Esophagus squamous epithelium (tissue), 5 donors: ENCODE measurements at regions of chr7 and their contacts with region 1.

Region 1: GRCh38 chr7:150898475-150899011 is 46.2 kb downstream of the AOC1 start:
- DNase-seq: no peak
- H3K4me3 ChIP-seq: no peak overlapping the region
- H3K27ac ChIP-seq: peak overlapping the region in 1 of 4 donors; percentile 16
- H3K4me1 ChIP-seq: peaks cover 6 to 30% (median 6%) of the 10 kb centered on the region in 3 donors
- H3K27me3 ChIP-seq: peaks cover 0 to 46% (median 2%) of the 10 kb centered on the region in 4 donors
- CTCF ChIP-seq: peak; percentile 81 to 97 (median 91)
- POLR2A ChIP-seq: no peak

Region 2: GRCh38 chr7:150924369-150924781 is 25.8 kb after region 1 on chr7:
- intact Hi-C with region 1: no loop called
- DNase-seq: no peak
- H3K4me3 ChIP-seq: no peak overlapping the region
- H3K27ac ChIP-seq: no peak overlapping the region
- H3K4me1 ChIP-seq: no peaks in the 10 kb centered on the region
- H3K27me3 ChIP-seq: peaks cover 0 to 31% (median 0%) of the 10 kb centered on the region in 4 donors
- CTCF ChIP-seq: no peak
- POLR2A ChIP-seq: no peak

Region 3: DNA sequence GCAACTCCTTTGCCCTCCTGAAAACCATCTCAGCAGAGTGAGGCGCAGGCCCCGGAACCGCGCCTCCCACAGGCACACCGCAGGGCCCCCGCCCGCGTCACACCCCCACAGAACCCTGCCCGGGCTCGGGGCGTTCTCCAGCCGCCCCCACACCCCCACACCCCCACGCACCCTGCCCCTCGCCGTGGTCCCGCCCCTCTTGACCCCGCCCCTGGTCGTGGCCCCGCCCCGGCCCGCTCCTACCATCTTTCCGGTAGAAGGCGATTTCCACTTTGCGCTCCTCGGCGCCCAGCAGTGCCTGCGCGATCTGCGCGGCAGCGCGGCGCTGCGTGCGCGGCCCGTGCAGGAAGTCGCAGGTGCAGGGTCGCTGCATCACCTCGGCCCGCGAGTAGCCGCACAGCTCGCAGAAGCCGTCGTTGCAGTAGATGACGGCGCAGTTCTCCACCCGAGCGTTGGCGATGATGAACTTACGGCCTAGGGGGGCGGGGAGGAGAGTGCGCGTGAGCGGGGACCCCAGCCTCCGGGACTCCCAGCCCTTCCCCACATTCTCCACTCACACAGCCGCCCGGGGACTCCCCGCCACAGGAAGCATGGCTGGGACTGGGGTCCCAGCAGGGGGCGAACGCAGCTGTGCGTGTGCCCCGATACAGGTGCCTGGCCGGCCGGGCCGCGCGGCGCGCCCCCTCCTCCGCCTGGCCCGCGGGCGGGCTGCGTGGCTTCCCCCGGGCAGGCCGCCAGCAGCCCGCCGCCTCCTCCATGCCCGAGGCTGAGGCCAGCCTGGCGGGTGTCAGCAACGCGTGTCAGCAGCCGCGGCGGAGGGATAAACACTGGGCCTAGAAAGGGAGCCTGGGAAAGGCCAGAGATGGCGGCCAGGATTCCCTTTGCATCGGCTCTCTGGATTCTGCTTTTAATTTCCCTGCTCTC is 76.2 kb after region 1 on chr7:
- intact Hi-C with region 1: no loop called
- DNase-seq: no peak
- H3K4me3 ChIP-seq: peak overlapping the region; percentile 18 to 62 (median 40)
- H3K27ac ChIP-seq: peak overlapping the region; percentile 16 to 79 (median 68)
- H3K4me1 ChIP-seq: peaks cover 15 to 84% (median 43%) of the 10 kb centered on the region in 3 donors
- H3K27me3 ChIP-seq: peaks cover 0 to 97% (median 11%) of the 10 kb centered on the region in 4 donors
- CTCF ChIP-seq: peak in 5 of 6 experiments; percentile 8 to 29 (median 22)
- POLR2A ChIP-seq: peak in 2 of 4 donors; percentile 16 to 44

Region 4: DNA sequence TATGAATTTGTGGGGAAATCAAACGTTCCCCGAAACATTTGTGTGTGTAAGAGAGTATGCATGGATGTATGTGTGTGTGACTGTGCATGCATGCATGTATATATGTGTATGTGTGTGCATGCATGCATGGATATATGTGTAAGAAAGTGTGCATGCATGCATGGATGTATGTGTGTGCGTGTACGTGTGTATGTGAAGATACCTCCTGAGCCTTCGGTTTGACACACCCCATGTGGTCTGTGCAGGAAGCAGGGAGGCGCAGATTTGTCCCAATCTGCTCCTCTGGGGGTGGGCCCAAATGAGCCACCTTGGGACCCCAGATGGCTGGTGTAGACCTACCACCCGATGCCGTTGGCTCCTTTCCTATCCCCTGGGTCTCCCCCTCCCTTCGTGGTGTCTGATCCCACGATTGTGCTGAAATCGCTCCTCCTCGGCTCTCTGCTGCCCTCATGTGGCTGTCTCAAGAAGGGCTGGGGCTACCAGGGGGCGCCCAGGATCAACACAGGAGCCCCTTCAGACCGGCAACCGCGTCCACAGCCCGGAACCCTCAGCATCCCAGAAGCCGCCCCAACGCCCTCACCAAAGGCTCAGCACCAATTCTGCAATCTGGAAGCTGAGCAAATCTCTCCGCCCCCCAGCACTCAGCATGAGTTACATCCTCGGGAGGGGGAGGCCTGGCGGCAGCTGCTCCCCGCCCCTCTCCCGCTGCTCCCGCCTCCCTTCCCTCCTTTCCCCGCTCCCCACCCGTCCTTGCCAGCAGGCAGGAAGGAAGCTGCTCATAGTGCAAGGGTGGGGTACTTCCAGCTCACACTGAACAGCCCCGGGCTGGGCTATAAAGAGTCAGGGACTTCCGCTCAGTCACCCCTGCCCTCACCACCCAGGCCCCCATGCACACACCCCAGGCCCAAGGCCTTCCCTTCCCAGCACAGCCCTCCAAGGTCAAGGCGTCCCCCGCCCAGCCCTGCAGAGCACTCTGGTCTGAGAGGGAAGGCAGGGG is 90.0 kb after region 1 on chr7:
- intact Hi-C with region 1: loop called (anchors 5 kb)
- DNase-seq: no peak
- H3K4me3 ChIP-seq: peak overlapping the region in 1 of 4 donors; percentile 37
- H3K27ac ChIP-seq: peak overlapping the region in 3 of 4 donors; percentile 22 to 75 (median 30)
- H3K4me1 ChIP-seq: peaks cover 0 to 37% (median 20%) of the 10 kb centered on the region in 3 donors
- H3K27me3 ChIP-seq: peaks cover 0 to 32% (median 0%) of the 10 kb centered on the region in 4 donors
- CTCF ChIP-seq: peak; percentile 62 to 84 (median 75)
- POLR2A ChIP-seq: no peak

Region 5: DNA sequence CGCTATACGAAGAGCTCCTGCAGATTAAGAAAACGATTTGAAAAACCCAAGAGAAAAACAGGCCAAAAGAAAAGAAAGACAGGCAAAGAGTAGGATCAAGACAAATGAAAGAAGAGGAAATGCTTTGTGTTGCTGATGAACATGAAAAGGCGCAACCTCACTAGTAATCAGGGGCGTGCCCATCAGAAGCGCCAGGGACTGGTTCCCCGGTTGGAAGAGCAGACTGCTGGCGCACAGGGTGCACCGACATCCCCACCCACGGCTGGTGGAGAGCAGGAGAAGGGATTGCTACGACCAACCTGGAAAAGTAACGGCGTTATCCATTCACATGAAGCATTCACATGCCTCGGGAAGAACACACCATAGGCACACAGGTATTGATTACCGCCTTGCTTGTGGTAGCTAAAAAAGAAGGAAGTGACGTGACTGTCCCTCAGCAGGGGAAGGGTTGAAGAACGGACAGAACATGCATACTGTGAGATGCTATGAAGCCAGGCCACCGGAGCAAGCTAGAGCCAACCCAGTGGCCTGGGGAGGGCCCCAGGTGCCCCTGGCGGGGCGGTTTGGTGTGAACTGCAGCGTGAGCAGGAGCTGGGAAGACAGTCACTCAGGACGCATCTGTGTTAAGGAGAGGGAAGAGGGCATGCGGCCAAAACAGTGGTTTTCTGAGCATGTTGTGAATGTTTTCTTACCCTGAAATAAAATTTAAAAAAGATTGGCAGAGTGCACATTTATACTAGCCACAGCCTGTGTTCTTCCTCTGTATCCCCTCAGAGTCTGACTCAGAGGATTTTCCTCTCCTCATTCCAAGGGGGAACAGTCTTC is 206.1 kb after region 1 on chr7:
- intact Hi-C with region 1: loop called (anchors 10 kb)
- DNase-seq: no peak
- H3K4me3 ChIP-seq: no peak overlapping the region
- H3K27ac ChIP-seq: no peak overlapping the region
- H3K4me1 ChIP-seq: peaks cover 0 to 42% (median 0%) of the 10 kb centered on the region in 3 donors
- H3K27me3 ChIP-seq: no peaks in the 10 kb centered on the region
- CTCF ChIP-seq: no peak
- POLR2A ChIP-seq: no peak